Endothelial cell of umbilical vein (primary cell): ENCODE measurements at regions of chr3 and their contacts with region 1.

Region 1: GRCh38 chr3:170414202-170414663 is 4.4 kb upstream of the CLDN11 start:
- DNase-seq: peak; percentile 80
- H3K4me3 ChIP-seq: no peak overlapping the region
- H3K27ac ChIP-seq: no peak overlapping the region
- H3K4me1 ChIP-seq: peaks cover 5% of the 10 kb centered on the region
- H3K27me3 ChIP-seq: no peaks in the 10 kb centered on the region
- CTCF ChIP-seq: peak; percentile 90 to 92
- POLR2A ChIP-seq: no peak

Region 2: GRCh38 chr3:170429050-170429449 is 14.8 kb after region 1 on chr3:
- CTCF ChIA-PET with region 1: interaction called, 17 read pairs
- POLR2A ChIA-PET with region 1: interaction called, 8 read pairs
- dilution Hi-C with region 1: no loop called
- intact Hi-C with region 1: no loop called
- DNase-seq: peak; percentile 16
- H3K4me3 ChIP-seq: no peak overlapping the region
- H3K27ac ChIP-seq: no peak overlapping the region
- H3K4me1 ChIP-seq: peaks cover 31% of the 10 kb centered on the region
- H3K27me3 ChIP-seq: no peaks in the 10 kb centered on the region
- CTCF ChIP-seq: no peak
- POLR2A ChIP-seq: no peak

Region 3: DNA sequence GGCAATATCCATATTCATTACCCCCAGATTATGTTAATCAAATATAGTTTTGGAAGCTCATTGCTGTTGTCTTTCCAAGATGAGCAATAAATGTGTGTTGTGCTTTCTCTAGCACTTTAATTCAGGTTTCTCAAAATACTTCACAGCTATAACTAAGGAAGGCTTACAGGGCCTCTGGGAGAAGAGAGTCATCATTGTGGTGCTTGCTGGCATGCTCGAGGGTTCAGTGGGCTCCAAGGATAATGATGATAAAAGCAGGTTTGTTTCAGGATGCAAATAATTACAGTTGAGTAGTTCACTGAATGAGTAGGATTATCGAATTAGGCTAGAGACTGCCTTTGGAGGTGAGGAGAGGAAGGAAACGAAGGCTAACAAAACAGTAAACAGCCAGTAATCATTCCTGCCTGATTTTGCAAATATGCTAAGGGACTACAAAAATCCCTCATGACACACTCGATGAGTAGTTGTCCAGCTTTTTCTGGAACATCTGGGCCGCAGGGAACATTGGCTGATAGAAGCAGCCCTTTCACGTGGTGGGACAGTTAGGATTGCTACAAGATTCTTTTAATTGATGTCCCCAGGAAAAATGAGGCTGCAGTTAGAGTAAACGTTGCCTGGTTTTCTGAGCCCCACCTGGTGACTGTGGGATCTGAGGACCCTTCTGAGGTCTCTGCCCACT is 117.6 kb after region 1 on chr3:
- CTCF ChIA-PET with region 1: no interaction called
- POLR2A ChIA-PET with region 1: no interaction called
- dilution Hi-C with region 1: no loop called
- intact Hi-C with region 1: no loop called
- DNase-seq: no peak
- H3K4me3 ChIP-seq: no peak overlapping the region
- H3K27ac ChIP-seq: no peak overlapping the region
- H3K4me1 ChIP-seq: no peaks in the 10 kb centered on the region
- H3K27me3 ChIP-seq: no peaks in the 10 kb centered on the region
- CTCF ChIP-seq: no peak
- POLR2A ChIP-seq: no peak

Region 4: DNA sequence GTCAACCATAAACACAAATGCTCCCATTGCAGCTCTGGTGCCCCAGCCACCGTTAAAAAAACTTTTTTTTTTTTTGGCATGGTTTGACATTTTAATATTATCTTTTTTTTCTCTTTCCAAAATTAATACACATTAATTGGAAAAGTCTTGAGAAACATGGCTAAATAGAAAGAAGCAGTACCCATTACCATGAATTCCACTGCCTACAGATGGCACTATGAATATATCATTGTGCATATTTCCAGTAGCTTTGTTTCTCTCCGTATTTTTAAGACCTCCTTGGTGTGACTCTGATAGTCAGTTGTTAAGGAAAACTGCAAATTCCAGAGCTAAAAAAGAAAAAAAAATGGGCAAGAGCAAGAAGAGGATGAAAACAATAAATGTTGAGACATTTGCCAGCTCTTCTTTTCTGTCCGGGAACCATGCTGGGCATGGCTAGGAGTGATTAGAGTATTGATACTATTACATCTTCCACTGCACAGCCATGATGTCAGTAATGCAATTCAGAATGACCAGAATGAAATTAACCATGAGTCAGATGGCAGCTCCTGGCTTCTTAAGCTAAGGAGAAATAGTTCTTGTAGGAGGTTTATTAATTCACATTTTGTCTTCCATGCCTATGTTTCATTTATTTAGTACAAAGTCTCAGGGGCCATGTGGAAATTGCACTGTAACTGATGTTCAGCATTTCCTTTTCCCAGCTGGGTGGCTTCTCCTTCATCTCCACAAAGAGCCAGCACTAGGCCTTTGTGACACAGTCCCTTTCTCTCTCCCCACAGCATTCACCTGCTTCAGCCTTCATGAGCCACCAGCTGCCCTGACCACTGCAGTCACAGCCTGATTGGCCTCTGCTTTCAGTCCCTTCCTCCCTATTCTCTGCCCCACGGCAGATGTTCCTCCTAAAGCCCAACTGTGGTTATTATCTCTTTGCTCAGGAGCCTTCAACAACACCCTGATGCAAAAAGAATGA is 139.8 kb after region 1 on chr3:
- CTCF ChIA-PET with region 1: interaction called, 10 read pairs
- POLR2A ChIA-PET with region 1: no interaction called
- dilution Hi-C with region 1: no loop called
- intact Hi-C with region 1: no loop called
- DNase-seq: peak; percentile 25
- H3K4me3 ChIP-seq: no peak overlapping the region
- H3K27ac ChIP-seq: no peak overlapping the region
- H3K4me1 ChIP-seq: no peaks in the 10 kb centered on the region
- H3K27me3 ChIP-seq: no peaks in the 10 kb centered on the region
- CTCF ChIP-seq: no peak
- POLR2A ChIP-seq: no peak

Region 5: DNA sequence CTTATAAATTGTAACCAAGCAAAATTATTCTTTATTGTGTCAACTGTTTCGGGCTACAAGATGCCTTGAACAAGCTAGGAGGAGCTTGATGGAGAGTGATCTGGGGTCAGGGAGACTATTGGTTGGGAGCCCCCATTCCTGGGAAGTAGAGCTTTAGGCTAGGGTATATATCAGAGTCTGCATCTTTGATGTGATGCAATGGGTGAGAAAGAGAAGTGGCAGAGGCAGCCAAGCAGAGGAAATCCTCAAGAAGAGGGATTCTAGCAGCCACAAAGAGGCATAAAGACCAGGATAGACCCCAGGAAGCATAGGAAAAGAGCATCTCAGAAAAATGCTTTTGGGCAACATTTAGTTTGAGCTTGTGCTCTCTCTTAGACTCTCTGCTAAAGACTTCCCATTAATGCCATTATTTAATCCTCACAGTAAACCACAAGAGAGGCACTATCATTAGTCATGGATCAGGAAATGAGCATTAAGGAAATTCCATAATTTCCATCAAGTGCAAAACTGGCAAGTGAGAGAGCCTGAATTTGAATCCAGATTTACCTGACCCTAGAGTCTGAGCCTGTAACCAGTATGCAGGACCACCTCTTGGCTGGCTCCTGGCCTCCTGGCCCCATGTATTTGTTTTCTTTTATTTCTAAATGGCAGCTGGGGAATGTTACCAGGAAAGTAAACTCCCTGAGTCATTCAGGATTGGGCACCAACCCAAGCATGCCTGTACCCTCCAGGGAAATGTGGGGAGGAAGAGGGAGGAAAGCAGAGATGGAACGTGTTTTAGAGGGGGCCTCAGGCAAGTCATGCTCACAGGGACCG is 337.1 kb after region 1 on chr3:
- CTCF ChIA-PET with region 1: interaction called, 25 read pairs
- POLR2A ChIA-PET with region 1: no interaction called
- dilution Hi-C with region 1: no loop called
- intact Hi-C with region 1: no loop called
- DNase-seq: peak; percentile 95
- H3K4me3 ChIP-seq: no peak overlapping the region
- H3K27ac ChIP-seq: peak overlapping the region; percentile 95
- H3K4me1 ChIP-seq: peaks cover 77% of the 10 kb centered on the region
- H3K27me3 ChIP-seq: no peaks in the 10 kb centered on the region
- CTCF ChIP-seq: no peak
- POLR2A ChIP-seq: no peak

Region 6: GRCh38 chr3:170835336-170835735 is 421.1 kb after region 1 on chr3:
- CTCF ChIA-PET with region 1: interaction called, 10 read pairs
- POLR2A ChIA-PET with region 1: no interaction called
- dilution Hi-C with region 1: no loop called
- intact Hi-C with region 1: no loop called
- DNase-seq: no peak
- H3K4me3 ChIP-seq: no peak overlapping the region
- H3K27ac ChIP-seq: no peak overlapping the region
- H3K4me1 ChIP-seq: no peaks in the 10 kb centered on the region
- H3K27me3 ChIP-seq: peaks cover 22 to 23% of the 10 kb centered on the region in 2 experiments
- CTCF ChIP-seq: no peak
- POLR2A ChIP-seq: no peak

Region 7: GRCh38 chr3:171149526-171150116 is 735.4 kb after region 1 on chr3:
- CTCF ChIA-PET with region 1: no interaction called
- POLR2A ChIA-PET with region 1: no interaction called
- dilution Hi-C with region 1: no loop called
- intact Hi-C with region 1: no loop called
- DNase-seq: no peak
- H3K4me3 ChIP-seq: no peak overlapping the region
- H3K27ac ChIP-seq: no peak overlapping the region
- H3K4me1 ChIP-seq: no peaks in the 10 kb centered on the region
- H3K27me3 ChIP-seq: no peaks in the 10 kb centered on the region
- CTCF ChIP-seq: no peak
- POLR2A ChIP-seq: no peak